Activated CD8-positive, alpha-beta T cell treated with anti-CD3 and anti-CD28 coated beads for 36 hours (primary cell): ENCODE measurements at regions of chr4 and their contacts with region 1.

Region 1: DNA sequence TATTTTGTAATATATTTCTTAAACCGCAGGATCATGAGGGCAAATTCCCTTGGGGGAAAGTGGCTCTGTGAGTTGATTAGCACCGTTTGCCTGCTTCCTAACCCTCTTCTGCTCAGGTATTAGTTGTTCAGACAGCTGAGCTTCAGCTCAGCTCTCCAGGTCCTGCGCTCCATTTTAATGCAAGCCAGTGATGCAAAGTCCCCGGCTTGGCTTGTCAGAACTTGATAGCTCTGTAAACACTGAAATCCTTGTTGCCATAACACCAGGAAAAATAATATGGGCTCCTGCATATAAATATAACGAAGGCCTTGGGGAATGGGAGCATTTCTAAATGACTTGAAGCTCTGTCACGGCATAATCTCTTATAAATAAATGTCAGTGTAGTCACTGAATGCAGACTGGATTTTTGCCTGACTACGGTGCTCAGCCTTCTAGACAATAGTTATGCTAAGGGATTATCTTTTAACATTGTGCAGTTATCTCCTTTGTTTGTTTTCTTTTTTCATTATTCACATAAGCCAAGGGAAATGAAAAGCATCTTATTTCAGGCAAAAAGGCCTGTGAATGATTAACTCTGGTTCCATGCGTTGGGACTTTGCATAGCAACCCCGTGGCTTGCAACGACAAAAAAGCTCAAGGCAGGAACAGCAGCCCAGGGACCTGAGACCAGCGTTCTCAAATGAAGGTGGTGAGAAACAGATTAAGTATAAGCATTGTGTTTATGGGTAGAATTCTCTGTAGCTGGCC is 253.2 kb downstream of the SPRY1 start:
- DNase-seq: no peak
- ATAC-seq: no peak
- H3K4me3 Mint-ChIP-seq: no peak overlapping the region
- H3K27ac Mint-ChIP-seq: no peak overlapping the region
- H3K4me1 Mint-ChIP-seq: no peaks in the 10 kb centered on the region
- H3K27me3 Mint-ChIP-seq: no peaks in the 10 kb centered on the region
- CTCF ChIP-seq: no peak

Region 2: GRCh38 chr4:123661080-123661737 is 11.4 kb after region 1 on chr4:
- CTCF ChIA-PET with region 1: interaction called, 13 read pairs
- POLR2A ChIA-PET with region 1: no interaction called
- intact Hi-C with region 1: no loop called
- DNase-seq: no peak
- ATAC-seq: no peak
- H3K4me3 Mint-ChIP-seq: no peak overlapping the region
- H3K27ac Mint-ChIP-seq: no peak overlapping the region
- H3K4me1 Mint-ChIP-seq: peaks cover 15% of the 10 kb centered on the region
- H3K27me3 Mint-ChIP-seq: peaks cover 2% of the 10 kb centered on the region
- CTCF ChIP-seq: peak; percentile 51